ENCODE measurements at regions of chr11 and their contacts with region 1.

Region 1: GRCh38 chr11:85810871-85811611 is at the start of gene SYTL2:
- DNase-seq: peak; percentile 71
- ATAC-seq: peak; percentile 89
- H3K4me3 Mint-ChIP-seq: peak within 1 kb of the TSS; percentile 80
- H3K27ac Mint-ChIP-seq: peak within 1 kb of the TSS; percentile 80
- H3K4me1 Mint-ChIP-seq: peaks cover 23% of the 10 kb centered on the region
- H3K27me3 Mint-ChIP-seq: peaks cover 9% of the 10 kb centered on the region
- CTCF ChIP-seq: no peak
- total RNA-seq, gene SYTL2: 9.5 to 11.2 TPM

Region 2: DNA sequence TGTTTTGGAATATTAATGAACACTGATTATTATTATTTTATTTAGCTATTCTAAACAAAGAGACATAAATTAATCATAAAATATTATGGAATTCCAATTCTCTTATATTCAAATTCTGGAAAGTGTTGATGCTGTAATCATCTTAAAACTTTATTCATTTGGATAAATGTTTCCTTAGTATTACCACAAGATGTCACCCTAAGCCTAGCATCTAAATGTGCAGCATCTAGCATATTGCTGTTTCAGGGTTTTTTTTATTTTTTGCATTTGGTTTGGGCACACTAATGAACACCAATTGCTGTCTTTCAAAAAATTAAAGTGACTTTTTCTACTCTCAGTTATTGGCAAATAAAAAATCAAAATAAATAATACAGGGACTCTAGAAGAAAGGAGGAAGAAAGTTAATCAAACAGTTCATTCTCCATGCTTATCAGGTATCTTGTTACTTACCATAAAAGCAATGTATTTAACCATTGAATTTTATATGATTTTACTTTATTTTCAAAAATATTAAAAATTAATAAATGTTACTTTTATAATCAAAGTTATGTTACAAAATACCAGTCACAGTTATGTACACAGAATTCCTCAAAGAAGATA is 215.7 kb before region 1 on chr11:
- CTCF ChIA-PET with region 1: no interaction called
- POLR2A ChIA-PET with region 1: no interaction called
- intact Hi-C with region 1: loop called (anchors 10 kb)
- DNase-seq: no peak
- ATAC-seq: no peak
- H3K4me3 Mint-ChIP-seq: no peak overlapping the region
- H3K27ac Mint-ChIP-seq: no peak overlapping the region
- H3K4me1 Mint-ChIP-seq: no peaks in the 10 kb centered on the region
- H3K27me3 Mint-ChIP-seq: no peaks in the 10 kb centered on the region
- CTCF ChIP-seq: peak; percentile 75

Region 3: GRCh38 chr11:85795712-85796487 is 15.1 kb before region 1 on chr11:
- CTCF ChIA-PET with region 1: interaction called, 13 read pairs
- POLR2A ChIA-PET with region 1: interaction called, 4 read pairs
- intact Hi-C with region 1: no loop called
- DNase-seq: no peak
- ATAC-seq: no peak
- H3K4me3 Mint-ChIP-seq: no peak overlapping the region
- H3K27ac Mint-ChIP-seq: no peak overlapping the region
- H3K4me1 Mint-ChIP-seq: peaks cover 31% of the 10 kb centered on the region
- H3K27me3 Mint-ChIP-seq: no peaks in the 10 kb centered on the region
- CTCF ChIP-seq: no peak

Region 4: GRCh38 chr11:85863855-85864254 is 52.8 kb after region 1 on chr11:
- CTCF ChIA-PET with region 1: no interaction called
- POLR2A ChIA-PET with region 1: no interaction called
- intact Hi-C with region 1: no loop called
- DNase-seq: no peak
- ATAC-seq: no peak
- H3K4me3 Mint-ChIP-seq: no peak overlapping the region
- H3K27ac Mint-ChIP-seq: no peak overlapping the region
- H3K4me1 Mint-ChIP-seq: no peaks in the 10 kb centered on the region
- H3K27me3 Mint-ChIP-seq: peaks cover 5% of the 10 kb centered on the region
- CTCF ChIP-seq: no peak

Measured in activated CD8-positive, alpha-beta T cell treated with anti-CD3 and anti-CD28 coated beads for 36 hours (primary cell).